ENCODE measurements at regions of chr11 and their contacts with region 1.

Region 1: GRCh38 chr11:45031912-45032519 is 81.3 kb upstream of the TP53I11 start:
- DNase-seq: no peak
- H3K4me3 ChIP-seq: no peak overlapping the region
- H3K27ac ChIP-seq: no peak overlapping the region
- H3K4me1 ChIP-seq: no peaks in the 10 kb centered on the region
- H3K27me3 ChIP-seq: no peaks in the 10 kb centered on the region
- CTCF ChIP-seq: no peak
- EP300 ChIP-seq: no peak
- POLR2A ChIP-seq: no peak
- RAD21 ChIP-seq: no peak

Region 2: DNA sequence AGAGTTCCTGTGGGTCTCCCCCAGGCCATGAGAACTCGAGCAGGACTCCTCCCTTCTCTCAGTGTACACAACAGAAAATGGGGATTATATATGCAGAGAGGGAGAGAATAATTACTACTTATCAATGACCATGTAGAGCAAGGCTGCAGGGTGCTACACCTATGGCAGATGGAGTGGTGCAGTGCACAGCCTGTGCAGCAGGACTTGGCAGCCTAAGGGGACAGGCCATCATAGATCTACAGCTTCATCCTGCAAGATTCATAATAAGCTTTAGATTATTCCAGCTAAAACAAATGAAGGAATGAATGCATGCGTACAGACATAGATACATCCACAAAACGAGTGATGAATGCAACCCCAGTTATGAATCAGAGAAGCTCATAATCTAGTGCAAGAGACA is 73.0 kb before region 1 on chr11:
- CTCF ChIA-PET with region 1: no interaction called
- POLR2A ChIA-PET with region 1: no interaction called
- DNase-seq: no peak
- H3K4me3 ChIP-seq: no peak overlapping the region
- H3K27ac ChIP-seq: no peak overlapping the region
- H3K4me1 ChIP-seq: peaks cover 22 to 65% (median 38%) of the 10 kb centered on the region in 4 experiments
- H3K27me3 ChIP-seq: peaks cover 0 to 2% (median 0%) of the 10 kb centered on the region in 4 experiments; a peak in 3 of 7 replicates
- CTCF ChIP-seq: no peak
- EP300 ChIP-seq: no peak
- POLR2A ChIP-seq: no peak
- RAD21 ChIP-seq: no peak

Region 3: DNA sequence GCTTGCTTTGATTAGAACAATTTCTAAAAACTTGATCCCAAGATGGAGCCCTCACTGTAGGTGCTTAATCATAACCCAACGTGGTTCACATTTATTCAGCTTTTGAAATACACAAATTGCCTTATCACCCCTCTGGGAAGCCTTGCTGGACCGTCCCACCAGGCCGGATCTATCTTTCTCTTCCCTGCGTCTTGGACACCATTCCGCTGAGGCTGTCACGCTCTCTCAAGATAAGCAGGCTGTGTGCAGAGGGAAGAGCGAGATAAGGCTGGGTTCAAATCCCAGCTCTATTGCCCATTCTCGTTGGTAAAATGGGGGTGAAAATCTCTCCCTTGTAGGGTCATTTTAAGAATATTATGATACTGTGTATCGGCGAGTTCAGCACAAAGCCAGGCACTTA is 60.8 kb before region 1 on chr11:
- CTCF ChIA-PET with region 1: no interaction called
- POLR2A ChIA-PET with region 1: no interaction called
- DNase-seq: no peak
- H3K4me3 ChIP-seq: no peak overlapping the region
- H3K27ac ChIP-seq: no peak overlapping the region
- H3K4me1 ChIP-seq: peaks cover 0 to 14% (median 5%) of the 10 kb centered on the region in 4 experiments; a peak in 6 of 7 replicates
- H3K27me3 ChIP-seq: no peaks in the 10 kb centered on the region; a peak in 2 of 7 replicates
- CTCF ChIP-seq: no peak
- EP300 ChIP-seq: no peak
- POLR2A ChIP-seq: no peak
- RAD21 ChIP-seq: no peak

Region 4: DNA sequence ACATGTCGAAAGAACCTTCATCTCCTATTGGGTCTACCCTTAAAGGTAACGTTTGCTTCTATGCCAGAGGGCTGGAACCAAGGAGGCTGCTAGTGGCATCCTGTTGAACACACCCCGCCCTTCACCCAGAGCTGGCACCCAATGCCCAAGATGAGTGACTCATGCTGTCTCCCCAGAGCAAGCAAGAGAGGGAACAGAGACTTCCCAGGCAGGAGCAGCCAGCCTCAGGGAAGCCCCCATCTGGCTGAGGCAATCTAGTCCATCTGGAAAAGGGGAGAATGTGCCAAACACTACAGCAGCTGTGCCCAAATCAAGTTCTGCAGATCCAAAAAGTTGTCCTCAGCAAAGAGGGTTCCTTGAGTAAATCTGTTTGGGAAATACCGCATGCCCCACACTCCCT is 10.5 kb after region 1 on chr11:
- CTCF ChIA-PET with region 1: interaction called, 21 read pairs
- POLR2A ChIA-PET with region 1: interaction called, 4 read pairs
- DNase-seq: no peak
- H3K4me3 ChIP-seq: no peak overlapping the region
- H3K27ac ChIP-seq: no peak overlapping the region
- H3K4me1 ChIP-seq: no peaks in the 10 kb centered on the region; a peak in 2 of 7 replicates
- H3K27me3 ChIP-seq: no peaks in the 10 kb centered on the region; a peak in 1 of 7 replicates
- CTCF ChIP-seq: no peak
- EP300 ChIP-seq: no peak
- POLR2A ChIP-seq: no peak
- RAD21 ChIP-seq: no peak

Measured in H1 (cell line).